ENCODE measurements at regions of chr21 and their contacts with region 1.

Region 1: DNA sequence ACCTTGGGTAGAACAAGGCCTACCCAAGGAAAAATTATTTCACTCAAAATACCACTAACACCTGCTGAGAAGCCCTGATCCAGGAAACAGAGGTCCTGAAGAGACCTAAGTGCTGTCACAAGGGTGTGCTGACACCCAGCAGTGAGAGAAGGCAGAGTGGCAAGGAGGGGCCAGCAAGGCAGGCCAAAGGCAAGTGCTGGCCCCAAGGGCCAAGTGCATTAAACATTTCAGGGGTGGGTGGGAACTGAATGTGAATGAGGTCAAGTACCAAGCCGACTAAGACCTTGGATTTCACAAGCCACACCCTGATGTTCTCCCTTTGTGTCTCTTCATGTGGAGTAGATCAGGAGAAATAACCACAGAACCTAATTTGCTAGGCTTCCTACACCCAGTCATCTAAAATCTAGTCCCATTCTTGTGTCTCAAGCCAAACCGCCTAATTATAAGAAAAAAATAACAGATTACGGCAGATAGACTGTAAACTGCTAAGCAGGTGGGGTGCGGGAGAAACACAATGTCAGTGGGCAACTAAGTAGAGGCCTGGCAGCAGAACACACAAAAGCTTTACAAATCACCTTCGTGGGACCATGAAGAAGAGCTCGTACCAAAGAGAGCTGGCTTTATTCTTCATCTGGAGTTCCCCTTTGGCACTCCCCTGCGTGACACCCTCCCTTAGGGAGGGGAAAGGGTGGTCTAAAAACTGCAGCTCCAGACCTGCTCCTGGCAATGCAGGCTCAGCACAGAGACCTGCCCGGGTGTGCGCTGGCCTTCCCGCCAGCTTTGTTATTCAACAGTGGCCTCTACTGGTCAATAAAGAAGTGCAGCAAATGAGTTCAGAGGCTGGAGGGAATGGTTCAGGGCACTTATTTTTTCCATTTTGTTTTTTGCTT is 8.7 kb downstream of the UBE2G2 start:
- DNase-seq: no peak
- H3K4me3 ChIP-seq: no peak overlapping the region
- H3K27ac ChIP-seq: no peak overlapping the region
- H3K4me1 ChIP-seq: peaks cover 4 to 11% (median 6%) of the 10 kb centered on the region in 3 donors
- H3K27me3 ChIP-seq: no peaks in the 10 kb centered on the region
- CTCF ChIP-seq: peak; percentile 36 to 78 (median 73)
- POLR2A ChIP-seq: no peak

Region 2: GRCh38 chr21:44510508-44511210 is 282.3 kb before region 1 on chr21:
- intact Hi-C with region 1: loop called (anchors 10 kb)
- DNase-seq: no peak
- H3K4me3 ChIP-seq: peak overlapping the region in 1 of 4 donors; percentile 47
- H3K27ac ChIP-seq: no peak overlapping the region
- H3K4me1 ChIP-seq: peaks cover 0 to 16% (median 0%) of the 10 kb centered on the region in 3 donors
- H3K27me3 ChIP-seq: peaks cover 0 to 73% (median 2%) of the 10 kb centered on the region in 4 donors
- CTCF ChIP-seq: peak; percentile 68 to 91 (median 84)
- POLR2A ChIP-seq: no peak

Region 3: GRCh38 chr21:44626262-44626661 is 166.7 kb before region 1 on chr21:
- intact Hi-C with region 1: no loop called
- DNase-seq: no peak
- H3K4me3 ChIP-seq: no peak overlapping the region
- H3K27ac ChIP-seq: no peak overlapping the region
- H3K4me1 ChIP-seq: no peaks in the 10 kb centered on the region
- H3K27me3 ChIP-seq: peaks cover 0 to 31% (median 0%) of the 10 kb centered on the region in 4 donors
- CTCF ChIP-seq: no peak
- POLR2A ChIP-seq: no peak

Region 4: GRCh38 chr21:44892536-44893277 is 99.8 kb after region 1 on chr21:
- intact Hi-C with region 1: loop called (anchors 10 kb)
- DNase-seq: no peak
- H3K4me3 ChIP-seq: no peak overlapping the region
- H3K27ac ChIP-seq: no peak overlapping the region
- H3K4me1 ChIP-seq: peaks cover 0 to 27% (median 14%) of the 10 kb centered on the region in 3 donors
- H3K27me3 ChIP-seq: peaks cover 0 to 75% (median 0%) of the 10 kb centered on the region in 4 donors
- CTCF ChIP-seq: peak; percentile 59 to 87 (median 85)
- POLR2A ChIP-seq: no peak

Region 5: GRCh38 chr21:44927587-44928461 is 134.9 kb after region 1 on chr21:
- intact Hi-C with region 1: loop called (anchors 5 kb)
- DNase-seq: no peak
- H3K4me3 ChIP-seq: peak overlapping the region in 2 of 4 donors; percentile 16 to 48
- H3K27ac ChIP-seq: peak overlapping the region; percentile 31 to 65 (median 44)
- H3K4me1 ChIP-seq: peaks cover 50 to 70% (median 50%) of the 10 kb centered on the region in 3 donors
- H3K27me3 ChIP-seq: peaks cover 11 to 67% (median 17%) of the 10 kb centered on the region in 4 donors
- CTCF ChIP-seq: peak in 1 of 6 experiments; percentile 9
- POLR2A ChIP-seq: no peak

Region 6: GRCh38 chr21:45129189-45129923 is 336.4 kb after region 1 on chr21:
- intact Hi-C with region 1: loop called (anchors 10 kb)
- DNase-seq: no peak
- H3K4me3 ChIP-seq: no peak overlapping the region
- H3K27ac ChIP-seq: peak overlapping the region; percentile 9 to 81 (median 73)
- H3K4me1 ChIP-seq: peaks cover 13 to 50% (median 27%) of the 10 kb centered on the region in 3 donors
- H3K27me3 ChIP-seq: no peaks in the 10 kb centered on the region
- CTCF ChIP-seq: no peak
- POLR2A ChIP-seq: no peak

Measured in esophagus squamous epithelium (tissue), 5 donors.